Activated CD4-positive, alpha-beta memory T cell treated with anti-CD3 and anti-CD28 coated beads, Interleukin-2, amount 10 ng/mL, durations not matched to agents 7 days and 5 days (primary cell): ENCODE measurements at regions of chr7 and their contacts with region 1.

Region 1: DNA sequence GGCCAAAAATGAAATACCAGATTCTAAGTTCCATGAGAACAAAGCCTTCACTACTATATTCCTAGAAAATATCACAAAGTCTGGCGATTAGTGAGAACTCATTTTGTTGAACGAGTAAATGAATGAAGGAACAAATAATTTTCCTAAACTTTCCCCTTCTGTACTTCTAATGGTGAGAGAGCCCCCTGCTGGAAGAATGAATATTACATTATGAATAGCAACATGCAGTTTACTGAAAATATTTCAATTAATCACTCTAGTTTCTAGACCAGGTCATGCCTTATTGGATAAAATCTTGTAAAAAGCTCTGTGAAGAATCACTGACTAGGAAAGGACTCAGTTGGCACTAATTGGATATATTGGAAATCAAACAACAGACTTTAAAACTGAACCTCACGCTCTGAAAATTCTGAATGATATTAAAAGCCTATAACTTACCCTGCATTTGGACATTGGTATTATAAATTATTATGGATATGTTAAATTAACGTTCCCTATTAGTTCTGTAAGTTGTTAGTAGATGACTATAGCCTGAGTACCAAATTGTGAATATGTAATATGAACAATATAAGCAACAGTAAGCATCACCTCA is 32.4 kb upstream of the MTPN start:
- DNase-seq: no peak
- H3K4me3 Mint-ChIP-seq: no peak overlapping the region
- H3K27ac Mint-ChIP-seq: no peak overlapping the region
- H3K4me1 Mint-ChIP-seq: no peaks in the 10 kb centered on the region
- H3K27me3 Mint-ChIP-seq: peaks cover 5% of the 10 kb centered on the region

Region 2: DNA sequence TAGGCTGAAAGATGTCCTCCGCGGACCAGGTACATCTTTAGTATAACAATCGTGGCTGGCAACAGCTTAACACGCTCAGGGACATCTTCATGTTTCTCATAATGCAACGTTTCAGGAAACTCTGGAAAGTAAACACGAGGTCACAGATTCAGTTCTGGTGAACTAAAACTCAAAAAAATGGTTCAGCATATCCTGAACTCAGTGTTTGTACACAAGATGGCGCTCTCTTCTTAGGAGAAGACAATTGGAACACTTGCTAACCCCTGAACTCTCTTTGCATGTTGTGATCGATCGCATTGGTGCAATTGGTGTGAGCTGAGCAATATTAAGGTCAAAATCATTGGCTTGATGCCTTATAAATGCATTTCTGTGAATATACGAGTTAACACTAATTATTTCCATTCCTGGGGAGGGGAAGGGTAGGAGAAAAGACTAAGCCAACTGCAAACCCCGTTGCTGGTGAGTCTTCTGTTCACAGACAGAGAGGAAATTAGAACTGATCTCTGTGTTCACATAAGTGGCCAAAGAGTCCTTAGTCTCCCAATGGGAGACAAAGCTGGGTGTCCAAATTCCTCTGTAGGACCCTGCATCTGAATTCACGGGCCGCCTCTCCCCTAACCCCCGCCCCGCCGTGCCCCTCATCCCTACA is 208.4 kb before region 1 on chr7:
- CTCF ChIA-PET with region 1: interaction called, 47 read pairs
- POLR2A ChIA-PET with region 1: no interaction called
- DNase-seq: peak; percentile 19
- H3K4me3 Mint-ChIP-seq: no peak overlapping the region
- H3K27ac Mint-ChIP-seq: no peak overlapping the region
- H3K4me1 Mint-ChIP-seq: peaks cover 5% of the 10 kb centered on the region
- H3K27me3 Mint-ChIP-seq: peaks cover 3% of the 10 kb centered on the region